RWPE1 (cell line): ENCODE measurements at regions of chr3 and their contacts with region 1.

Region 1: GRCh38 chr3:142279965-142280590 is 54.7 kb upstream of the GK5 start:
- DNase-seq: peak; percentile 69
- H3K27ac ChIP-seq: no peak overlapping the region
- CTCF ChIP-seq: peak; percentile 59

Region 2: GRCh38 chr3:142129516-142130171 is 150.4 kb before region 1 on chr3:
- CTCF ChIA-PET with region 1: interaction called, 10 read pairs
- POLR2A ChIA-PET with region 1: no interaction called
- DNase-seq: no peak
- H3K27ac ChIP-seq: no peak overlapping the region
- CTCF ChIP-seq: no peak